Calu3 (cell line): ENCODE measurements at regions of chr12 and their contacts with region 1.

Region 1: DNA sequence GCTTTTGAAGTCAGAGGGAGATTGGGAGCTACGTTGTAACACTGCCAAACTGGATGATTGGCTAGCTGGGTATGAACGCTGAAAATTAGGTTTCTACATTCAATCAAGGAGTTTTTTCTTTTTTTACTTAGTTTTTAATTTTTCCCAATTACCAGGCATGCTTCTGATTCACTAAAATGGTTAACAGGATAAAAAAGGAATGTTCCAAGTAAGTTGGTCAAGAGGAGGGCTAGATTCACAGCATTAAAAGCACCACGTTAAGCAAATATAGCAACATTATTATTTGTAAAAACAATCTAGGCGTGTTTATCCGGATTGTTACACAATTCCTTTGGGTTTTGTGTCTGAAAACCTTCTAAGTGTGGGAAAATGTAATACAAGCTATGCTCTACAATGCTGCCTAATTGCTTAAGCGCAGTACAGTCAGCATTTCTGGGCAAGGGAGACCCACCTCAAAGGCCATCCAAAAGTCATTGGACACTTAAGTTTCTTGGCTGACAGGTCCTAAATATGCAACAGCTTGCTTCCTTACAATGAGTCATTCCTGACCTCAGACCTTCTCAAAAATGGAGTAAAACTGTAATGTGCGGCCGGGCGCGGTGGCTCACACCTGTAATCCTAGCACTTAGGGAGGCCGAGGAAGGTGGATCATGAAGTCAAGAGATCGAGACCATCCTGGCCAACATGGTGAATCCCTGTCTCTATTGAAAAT is 1.2 kb downstream of the RPLP0 start:
- DNase-seq: peak; percentile 30
- H3K4me3 Mint-ChIP-seq: peak overlapping the region; percentile 85
- H3K27ac Mint-ChIP-seq: peak overlapping the region; percentile 96
- H3K4me1 Mint-ChIP-seq: peaks cover 22% of the 10 kb centered on the region
- H3K27me3 Mint-ChIP-seq: no peaks in the 10 kb centered on the region
- CTCF ChIP-seq: no peak

Region 2: GRCh38 chr12:120265473-120266179 is 65.9 kb after region 1 on chr12 and contains the start of gene PXN:
- CTCF ChIA-PET with region 1: interaction called, 21 read pairs
- intact Hi-C with region 1: loop called (anchors 2 kb)
- DNase-seq: peak; percentile 97
- H3K4me3 Mint-ChIP-seq: peak within 1 kb of the TSS; percentile 87
- H3K27ac Mint-ChIP-seq: peak within 1 kb of the TSS; percentile 74
- H3K4me1 Mint-ChIP-seq: peaks cover 35% of the 10 kb centered on the region
- H3K27me3 Mint-ChIP-seq: no peaks in the 10 kb centered on the region
- CTCF ChIP-seq: peak; percentile 89
- total RNA-seq, gene PXN: 156 and 172 TPM in 2 replicates